AG04449 (cell line): ENCODE measurements at regions of chr12 and their contacts with region 1.

Region 1: DNA sequence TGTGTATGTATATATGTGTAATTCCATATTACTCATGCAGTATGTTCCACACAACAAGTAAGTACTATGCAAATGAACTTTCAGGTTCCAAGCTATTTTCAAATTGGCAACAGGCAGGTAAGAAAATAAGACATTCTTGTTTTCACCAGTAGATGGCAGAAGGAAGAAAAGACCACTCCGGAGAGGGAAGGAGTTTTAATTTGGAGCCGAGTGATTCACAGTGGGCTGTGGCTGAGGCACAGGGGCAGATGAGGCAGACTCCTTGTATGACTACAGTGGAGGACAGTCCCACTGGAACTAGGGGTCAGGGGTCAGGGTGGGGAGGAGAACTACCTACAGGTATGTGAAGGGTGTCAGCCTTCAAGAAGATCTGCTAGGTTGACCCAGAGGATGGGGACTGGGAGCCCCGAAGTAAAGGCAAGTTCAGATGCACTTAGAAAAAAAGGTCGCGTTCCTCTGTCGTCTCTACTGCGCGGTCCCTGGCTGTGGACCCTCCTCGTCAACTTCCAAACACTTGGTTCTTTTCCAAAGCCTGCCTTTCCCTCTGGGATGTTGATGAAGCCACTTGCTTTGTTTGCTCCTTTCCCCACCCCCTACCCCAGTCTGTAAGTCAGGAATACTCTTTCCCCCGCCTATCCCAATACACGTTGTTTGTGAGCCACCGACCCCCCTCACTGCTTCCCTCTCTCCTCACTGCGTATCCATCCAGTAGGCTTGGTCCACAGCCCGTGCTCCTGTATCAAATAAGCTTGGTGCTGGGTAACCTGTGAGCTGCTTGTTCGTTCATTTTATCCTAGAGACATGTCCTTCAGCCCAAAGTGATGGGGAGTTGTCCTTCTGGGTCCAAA is 24.1 kb downstream of the DDX47 start:
- DNase-seq: no peak
- H3K4me3 ChIP-seq: no peak overlapping the region
- CTCF ChIP-seq: peak; percentile 47

Region 2: DNA sequence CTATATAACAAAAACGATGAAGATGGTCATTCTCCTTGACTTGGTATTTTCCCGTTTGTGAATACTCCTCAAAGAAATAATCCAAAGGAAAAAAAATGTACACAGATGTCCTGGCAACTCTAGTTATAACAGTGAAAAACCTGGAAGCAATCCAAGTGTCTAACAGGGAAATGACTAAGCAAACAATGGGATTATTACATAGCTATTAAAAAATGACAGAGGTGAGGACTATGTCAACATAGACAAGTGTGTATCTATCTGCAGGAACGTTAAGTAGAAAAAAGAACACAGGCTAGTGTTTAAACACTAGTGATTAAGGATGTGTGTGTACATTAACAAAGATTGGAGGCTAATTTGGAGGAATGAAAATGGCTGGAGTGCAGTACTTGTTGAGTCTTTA is 57.7 kb before region 1 on chr12:
- CTCF ChIA-PET with region 1: no interaction called
- POLR2A ChIA-PET with region 1: no interaction called
- DNase-seq: no peak
- H3K4me3 ChIP-seq: no peak overlapping the region
- CTCF ChIP-seq: no peak

Region 3: GRCh38 chr12:12819671-12820311 is 17.5 kb before region 1 on chr12:
- CTCF ChIA-PET with region 1: interaction called, 67 read pairs
- POLR2A ChIA-PET with region 1: no interaction called
- DNase-seq: peak; percentile 92
- H3K4me3 ChIP-seq: no peak overlapping the region
- CTCF ChIP-seq: peak; percentile 6

Region 4: DNA sequence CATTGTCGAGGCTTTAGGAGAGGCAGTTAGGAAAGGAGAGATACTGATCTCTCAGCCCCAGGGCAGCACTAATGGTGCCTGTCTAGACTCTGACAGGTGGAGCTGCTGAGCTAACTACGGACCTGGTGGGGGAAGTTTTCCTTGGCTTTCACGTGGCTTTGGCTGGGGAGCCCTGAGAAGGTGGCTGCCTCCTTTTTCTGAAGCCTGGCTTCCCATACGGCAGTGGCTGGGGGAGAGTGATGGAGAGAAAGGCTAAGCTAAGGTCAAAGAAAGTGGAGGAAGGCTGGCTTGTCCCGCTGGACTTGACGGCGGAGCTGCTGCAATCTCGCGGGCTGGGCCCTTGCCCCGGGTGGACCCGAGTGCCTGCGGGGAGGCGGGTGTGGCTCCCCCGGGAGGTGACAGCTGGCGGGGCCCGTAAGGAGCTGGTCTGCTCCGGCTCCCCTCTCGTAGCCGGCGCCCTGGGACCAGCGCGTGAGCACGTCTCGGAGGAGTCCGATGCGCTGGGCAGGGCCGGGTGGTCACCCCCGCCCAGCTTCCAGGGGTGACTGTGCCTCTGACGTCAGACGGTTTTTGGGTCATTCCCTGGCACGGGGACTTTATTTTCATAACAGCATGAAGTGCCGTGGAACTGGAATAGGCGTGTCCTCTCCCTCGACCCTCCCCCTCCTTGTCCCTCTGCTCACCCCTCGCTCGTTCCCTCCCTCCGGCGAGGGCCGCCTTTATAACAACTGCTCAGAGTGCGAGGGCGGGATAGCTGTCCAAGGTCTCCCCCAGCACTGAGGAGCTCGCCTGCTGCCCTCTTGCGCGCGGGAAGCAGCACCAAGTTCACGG is 53.8 kb after region 1 on chr12 and contains the start of gene GPRC5A:
- CTCF ChIA-PET with region 1: interaction called, 19 read pairs
- POLR2A ChIA-PET with region 1: no interaction called
- DNase-seq: peak; percentile 80
- H3K4me3 ChIP-seq: peak within 1 kb of the TSS; percentile 63
- CTCF ChIP-seq: peak; percentile 42

Region 5: DNA sequence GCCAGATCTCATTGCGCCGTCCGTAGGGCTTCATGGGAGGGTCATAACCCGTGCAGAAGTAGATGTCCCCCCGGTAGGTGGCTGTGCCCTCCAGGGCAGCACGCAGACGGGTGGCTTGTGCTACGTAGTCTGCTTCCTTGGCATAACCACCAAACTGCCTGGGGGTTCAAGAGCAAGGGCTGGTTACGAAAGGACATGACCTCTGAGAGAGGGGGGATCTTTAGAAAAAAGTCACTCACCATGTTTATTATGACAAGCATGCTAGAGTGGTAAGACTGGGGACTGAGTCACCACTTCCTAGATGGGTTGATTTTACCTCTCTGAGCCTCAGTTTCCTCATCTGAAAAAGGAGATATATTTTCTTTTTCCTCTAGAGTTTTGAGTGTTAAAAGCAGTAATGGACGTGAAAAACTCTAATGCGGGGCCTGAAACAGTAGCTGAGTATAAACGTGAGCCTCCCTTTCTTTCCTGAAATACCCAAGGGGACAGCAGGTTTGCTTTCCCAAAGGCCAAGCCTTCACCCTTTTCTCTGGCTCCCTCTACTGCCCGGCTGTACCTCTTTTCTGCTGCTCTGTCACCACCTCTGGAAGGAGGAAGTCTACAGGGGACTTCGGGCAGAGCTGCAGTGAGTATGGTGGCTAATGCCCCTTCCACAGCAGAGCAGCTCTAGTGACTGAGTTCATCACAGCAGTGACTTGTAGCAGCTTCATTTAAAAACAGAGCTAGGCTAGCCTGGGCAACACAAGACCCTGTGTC is 138.3 kb after region 1 on chr12:
- CTCF ChIA-PET with region 1: interaction called, 63 read pairs
- POLR2A ChIA-PET with region 1: interaction called, 3 read pairs
- DNase-seq: no peak
- H3K4me3 ChIP-seq: no peak overlapping the region
- CTCF ChIP-seq: peak; percentile 52

Region 6: GRCh38 chr12:12983420-12984035 is 146.3 kb after region 1 on chr12:
- CTCF ChIA-PET with region 1: interaction called, 63 read pairs
- POLR2A ChIA-PET with region 1: interaction called, 3 read pairs
- DNase-seq: no peak
- H3K4me3 ChIP-seq: no peak overlapping the region
- CTCF ChIP-seq: peak; percentile 69